Activated CD4-positive, alpha-beta memory T cell treated with anti-CD3 and anti-CD28 coated beads, Interleukin-2, amount 10 ng/mL, durations not matched to agents 7 days and 5 days (primary cell): ENCODE measurements at regions of chr18 and their contacts with region 1.

Region 1: GRCh38 chr18:59899298-59900221 is at the start of gene PMAIP1:
- DNase-seq: peak; percentile 90
- H3K4me3 Mint-ChIP-seq: peak within 1 kb of the TSS; percentile 94
- H3K27ac Mint-ChIP-seq: peak within 1 kb of the TSS; percentile 93
- H3K4me1 Mint-ChIP-seq: peaks cover 52% of the 10 kb centered on the region
- H3K27me3 Mint-ChIP-seq: no peaks in the 10 kb centered on the region
- total RNA-seq, gene PMAIP1: 35.3 to 37.7 TPM

Region 2: DNA sequence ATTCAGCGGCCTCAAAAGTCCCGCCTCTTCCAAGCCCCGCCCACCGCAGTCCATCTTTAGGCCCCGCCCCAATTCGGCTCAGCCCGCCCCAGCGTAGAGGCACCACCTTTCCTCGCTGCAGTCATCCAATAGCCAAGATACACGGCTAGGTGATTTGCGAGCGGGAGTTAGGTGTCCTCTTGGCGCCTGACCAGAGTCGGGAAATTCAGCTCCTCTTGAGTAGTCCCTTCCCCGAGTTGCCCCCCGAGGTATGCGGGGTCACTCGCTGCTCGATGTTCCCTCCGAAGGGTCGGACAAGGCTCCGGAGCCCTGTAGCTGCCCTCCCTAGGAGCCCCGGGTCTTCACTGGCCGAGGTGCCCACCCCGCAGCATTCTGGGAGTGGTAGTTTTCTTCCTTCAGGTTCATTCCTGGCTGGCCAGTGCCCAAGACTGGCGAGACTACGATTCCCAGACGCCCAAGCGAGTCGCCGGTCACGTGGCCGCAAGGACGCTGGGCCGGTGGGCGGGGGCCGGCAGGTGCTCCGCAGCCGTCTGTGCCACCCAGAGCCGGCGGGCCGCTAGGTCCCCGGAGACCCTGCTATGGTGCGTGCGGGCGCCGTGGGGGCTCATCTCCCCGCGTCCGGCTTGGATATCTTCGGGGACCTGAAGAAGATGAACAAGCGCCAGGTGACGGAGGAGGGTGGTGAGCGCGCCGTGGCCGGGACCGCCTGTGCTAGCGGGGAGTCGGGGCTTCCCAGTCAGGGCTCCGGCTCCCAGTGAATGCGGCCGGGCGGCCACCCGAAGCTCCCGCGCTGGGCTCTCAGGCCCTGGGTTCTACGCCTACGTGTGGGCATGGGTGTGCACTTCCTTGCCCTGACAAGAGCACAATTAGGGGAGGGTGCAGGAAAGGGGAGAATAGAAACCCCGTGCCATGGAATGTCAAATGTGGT is 759.9 kb before region 1 on chr18 and contains the start of gene SEC11C:
- CTCF ChIA-PET with region 1: interaction called, 3 read pairs
- POLR2A ChIA-PET with region 1: interaction called, 14 read pairs
- DNase-seq: peak; percentile 96
- H3K4me3 Mint-ChIP-seq: peak within 1 kb of the TSS; percentile 92
- H3K27ac Mint-ChIP-seq: peak within 1 kb of the TSS; percentile 84
- H3K4me1 Mint-ChIP-seq: peaks cover 40% of the 10 kb centered on the region
- H3K27me3 Mint-ChIP-seq: peaks cover 8% of the 10 kb centered on the region
- total RNA-seq, gene SEC11C: 119 to 129 TPM

Region 3: DNA sequence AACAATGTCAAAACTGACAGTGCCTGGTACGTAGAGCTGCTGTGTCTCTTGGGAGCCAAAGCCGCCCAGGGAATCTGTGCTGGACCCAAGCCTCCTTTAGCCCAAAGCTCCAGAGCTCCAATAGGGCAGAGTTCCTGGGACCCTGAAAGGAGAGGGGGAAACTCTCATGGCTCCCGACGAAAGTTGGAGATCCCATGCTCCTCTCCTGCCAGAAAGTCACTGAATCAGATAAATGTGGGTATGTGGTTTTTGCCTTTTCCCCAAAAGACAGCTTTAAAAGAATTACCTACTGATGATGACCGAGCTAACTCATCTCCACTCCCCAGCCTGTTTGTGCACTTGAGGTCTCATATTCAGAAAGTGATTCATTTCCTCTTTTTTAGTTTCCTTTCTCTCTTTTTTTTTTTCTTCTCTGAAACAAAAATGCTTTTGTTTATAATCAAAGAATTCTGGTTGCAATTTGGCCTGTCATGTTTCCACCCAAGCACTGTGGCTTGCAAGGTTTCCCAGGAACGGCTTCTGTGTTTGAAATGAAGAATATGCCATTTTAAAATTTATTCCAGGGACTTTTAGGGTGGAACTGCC is 13.9 kb before region 1 on chr18:
- CTCF ChIA-PET with region 1: interaction called, 7 read pairs
- POLR2A ChIA-PET with region 1: interaction called, 101 read pairs
- DNase-seq: peak; percentile 45
- H3K4me3 Mint-ChIP-seq: peak overlapping the region; percentile 44
- H3K27ac Mint-ChIP-seq: peak overlapping the region; percentile 44
- H3K4me1 Mint-ChIP-seq: peaks cover 52% of the 10 kb centered on the region
- H3K27me3 Mint-ChIP-seq: no peaks in the 10 kb centered on the region

Region 4: DNA sequence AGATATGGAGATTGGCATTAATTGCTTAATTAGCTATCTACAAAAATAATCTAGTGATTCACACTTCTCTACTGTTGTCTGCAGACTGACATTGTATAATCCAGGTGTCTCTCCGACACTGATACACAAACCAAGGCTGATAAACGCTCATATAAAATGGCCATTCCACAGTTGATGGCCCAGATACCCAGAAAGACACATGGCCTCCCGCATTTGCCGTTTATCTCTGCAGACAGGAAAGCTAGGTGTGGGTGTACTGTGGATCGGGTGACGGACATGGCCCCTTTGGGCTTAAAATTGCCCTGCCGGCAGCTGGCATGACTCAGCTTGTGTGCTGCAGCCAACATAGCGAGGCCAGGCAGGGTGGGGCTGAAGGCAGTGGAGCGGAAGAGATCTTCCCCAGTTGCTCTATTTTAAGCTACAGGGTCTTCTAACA is 18.8 kb after region 1 on chr18:
- CTCF ChIA-PET with region 1: no interaction called
- POLR2A ChIA-PET with region 1: interaction called, 23 read pairs
- DNase-seq: no peak
- H3K4me3 Mint-ChIP-seq: no peak overlapping the region
- H3K27ac Mint-ChIP-seq: no peak overlapping the region
- H3K4me1 Mint-ChIP-seq: peaks cover 25% of the 10 kb centered on the region
- H3K27me3 Mint-ChIP-seq: peaks cover 2% of the 10 kb centered on the region

Region 5: GRCh38 chr18:59927246-59927825 is 27.8 kb after region 1 on chr18:
- CTCF ChIA-PET with region 1: no interaction called
- POLR2A ChIA-PET with region 1: interaction called, 23 read pairs
- DNase-seq: no peak
- H3K4me3 Mint-ChIP-seq: no peak overlapping the region
- H3K27ac Mint-ChIP-seq: no peak overlapping the region
- H3K4me1 Mint-ChIP-seq: peaks cover 30% of the 10 kb centered on the region
- H3K27me3 Mint-ChIP-seq: no peaks in the 10 kb centered on the region

Region 6: DNA sequence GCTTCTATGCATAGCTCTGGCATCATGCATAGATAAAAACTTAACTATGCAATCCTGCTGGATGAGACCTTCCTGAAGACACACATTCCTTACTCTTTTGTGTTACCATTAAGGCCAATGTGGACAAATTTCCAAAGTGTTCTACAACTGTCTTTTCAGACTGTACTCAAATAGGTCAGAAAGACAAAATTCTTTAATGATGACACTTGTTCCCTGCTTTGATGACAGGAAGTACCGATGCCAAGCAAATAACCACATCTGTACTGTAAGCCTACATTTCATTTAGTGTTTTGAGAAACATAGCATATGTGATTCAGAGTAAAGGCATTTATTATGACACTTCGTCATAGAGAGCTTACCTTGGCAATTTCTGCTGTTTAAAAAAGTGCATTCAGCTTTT is 55.2 kb after region 1 on chr18:
- CTCF ChIA-PET with region 1: interaction called, 3 read pairs
- POLR2A ChIA-PET with region 1: interaction called, 22 read pairs
- DNase-seq: no peak
- H3K4me3 Mint-ChIP-seq: no peak overlapping the region
- H3K27ac Mint-ChIP-seq: no peak overlapping the region
- H3K4me1 Mint-ChIP-seq: peaks cover 49% of the 10 kb centered on the region
- H3K27me3 Mint-ChIP-seq: no peaks in the 10 kb centered on the region